ENCODE measurements at regions of chr2 and their contacts with region 1.

Region 1: DNA sequence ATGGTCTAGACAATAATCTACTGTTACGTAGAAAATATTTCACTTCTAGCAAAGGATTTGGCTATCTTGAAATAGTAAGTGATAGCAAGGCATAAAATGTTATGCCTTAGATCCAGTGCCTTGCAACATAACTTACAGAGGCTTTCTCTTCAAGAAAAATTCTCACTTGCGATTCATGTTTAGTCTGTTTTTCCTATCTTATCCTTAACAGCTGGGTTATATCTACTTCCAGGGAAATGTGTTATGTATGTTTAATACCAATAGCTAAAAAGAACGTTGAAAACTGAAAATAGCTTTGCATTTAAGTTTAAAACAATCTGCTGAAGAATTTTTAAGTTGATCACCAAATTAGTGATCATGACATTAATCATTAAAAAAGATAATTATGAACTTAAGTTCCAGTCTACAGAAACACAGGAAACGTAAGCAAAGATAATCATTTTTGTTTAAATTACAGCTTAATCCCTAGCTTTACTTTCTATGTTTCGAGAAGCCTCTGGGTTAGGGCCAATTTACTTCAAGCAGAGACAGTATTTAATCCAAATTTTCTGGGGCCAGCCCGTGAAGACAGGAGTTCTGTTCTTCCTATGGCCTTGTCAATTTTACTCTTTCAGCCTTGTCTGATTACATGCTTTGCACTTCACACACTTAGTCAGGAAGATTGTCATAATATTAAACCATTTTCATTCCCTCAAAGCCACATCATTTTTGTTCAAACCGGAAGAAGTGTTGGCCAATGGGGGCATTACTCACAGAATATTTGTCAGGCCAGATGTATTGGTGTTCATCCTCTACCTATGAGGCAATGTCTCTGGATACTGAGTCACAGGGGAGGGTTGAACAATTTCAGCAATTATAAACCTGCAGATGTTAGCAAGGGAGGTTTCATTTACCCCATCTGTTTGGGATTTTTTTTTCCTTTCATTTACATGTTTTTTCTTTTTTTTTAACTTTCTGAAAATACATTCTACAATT is 1132.9 kb upstream of the ZEB2 start:
- DNase-seq: peak; percentile 94
- H3K4me3 ChIP-seq: peak overlapping the region in 1 of 3 experiments; percentile 20
- H3K27ac ChIP-seq: peak overlapping the region; percentile 44
- H3K4me1 ChIP-seq: peaks cover 13% of the 10 kb centered on the region
- H3K27me3 ChIP-seq: no peaks in the 10 kb centered on the region
- CTCF ChIP-seq: no peak

Region 2: DNA sequence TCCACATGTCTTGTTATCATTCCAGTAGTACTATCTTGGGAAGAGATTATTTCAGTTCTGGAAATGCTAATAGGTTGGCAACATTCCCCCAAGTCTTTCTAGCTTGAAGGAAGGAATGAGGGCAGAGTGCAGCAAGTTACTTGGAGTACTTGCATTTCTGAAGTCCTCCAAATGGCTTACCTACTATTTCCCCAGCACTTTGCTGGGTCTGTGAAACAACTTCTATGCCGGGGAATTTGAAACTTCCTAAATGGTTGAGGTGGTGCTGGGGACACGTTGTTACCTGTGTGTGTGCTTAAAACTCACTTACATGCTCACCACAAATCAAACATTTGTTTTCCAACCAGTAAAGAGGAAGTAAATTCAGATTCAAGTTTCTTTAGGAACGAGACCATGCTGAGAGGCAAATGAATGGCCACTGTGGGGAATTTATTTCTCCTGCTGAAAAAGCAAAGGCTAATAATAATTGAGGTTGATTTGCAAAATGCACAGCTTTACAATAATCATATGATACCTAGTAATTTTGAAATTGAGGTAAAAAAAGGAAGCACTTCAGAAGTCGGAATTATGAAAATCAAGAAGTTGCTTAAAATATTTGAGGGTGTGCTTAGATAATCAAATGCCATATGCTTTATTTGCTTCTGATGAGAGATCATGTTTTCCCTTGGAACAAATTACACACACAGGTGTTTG is 34.7 kb after region 1 on chr2:
- CTCF ChIA-PET with region 1: no interaction called
- dilution Hi-C with region 1: no loop called
- in situ Hi-C with region 1: no loop called
- intact Hi-C with region 1: loop called (anchors 5 kb)
- DNase-seq: peak; percentile 15
- H3K4me3 ChIP-seq: no peak overlapping the region
- H3K27ac ChIP-seq: no peak overlapping the region
- H3K4me1 ChIP-seq: peaks cover 24% of the 10 kb centered on the region
- H3K27me3 ChIP-seq: no peaks in the 10 kb centered on the region
- CTCF ChIP-seq: no peak